SK-N-SH (cell line): ENCODE measurements at regions of chr6 and their contacts with region 1.

Region 1: GRCh38 chr6:30326526-30327260 is at the start of gene TRIM39:
- DNase-seq: peak; percentile 91
- H3K4me3 ChIP-seq: peak within 1 kb of the TSS; percentile 77 to 96
- H3K27ac ChIP-seq: peak within 1 kb of the TSS; percentile 89 to 98
- H3K4me1 ChIP-seq: peaks cover 6 to 7% of the 10 kb centered on the region in 2 experiments; a peak in 2 of 4 replicates
- H3K27me3 ChIP-seq: no peaks in the 10 kb centered on the region
- CTCF ChIP-seq: no peak
- EP300 ChIP-seq: no peak
- RAD21 ChIP-seq: no peak
- polyA plus RNA-seq, gene TRIM39: 6.5 and 7.4 TPM in 2 replicates

Region 2: DNA sequence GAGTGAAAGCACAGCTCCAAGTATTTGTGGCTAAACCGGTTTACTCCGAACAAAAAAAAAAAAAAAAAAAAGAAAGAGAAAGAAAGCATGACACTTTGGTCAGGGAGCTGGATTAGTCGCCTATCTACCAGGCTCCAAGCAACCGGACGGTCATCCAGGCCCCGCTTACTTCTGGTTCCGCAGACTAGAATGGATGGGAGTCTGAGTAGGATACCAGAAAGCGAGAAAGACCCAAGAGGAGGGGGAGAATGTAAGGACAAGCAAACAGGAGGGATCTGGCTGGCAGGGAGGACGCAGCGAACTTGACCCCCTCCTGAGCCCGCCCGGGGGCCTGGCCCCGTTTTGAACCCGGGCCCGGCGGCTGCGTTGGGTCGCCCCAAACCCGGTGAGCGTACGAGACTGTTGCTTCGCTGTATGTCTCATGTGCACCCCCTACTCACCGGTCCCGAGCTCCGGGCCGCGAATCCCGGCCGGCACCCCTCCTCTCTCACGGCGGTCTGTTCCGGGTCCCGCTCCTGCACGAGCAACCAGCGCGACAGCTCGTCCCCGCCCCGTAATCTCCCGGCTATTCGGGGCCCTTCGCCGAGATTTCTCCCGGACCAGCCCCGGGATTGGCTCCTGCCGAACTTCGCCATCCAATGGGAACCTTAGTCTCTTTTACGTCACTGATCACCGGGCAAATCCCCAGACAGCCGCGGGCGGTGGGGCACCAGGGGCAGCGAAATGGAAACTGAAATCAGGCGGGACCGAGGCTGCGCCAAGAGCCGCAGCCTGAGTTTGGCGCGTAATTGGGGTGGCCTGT is 113.6 kb before region 1 on chr6 and contains the start of gene TRIM26:
- CTCF ChIA-PET with region 1: interaction called, 19 read pairs
- POLR2A ChIA-PET with region 1: interaction called, 10 read pairs
- DNase-seq: peak; percentile 98
- H3K4me3 ChIP-seq: peak within 1 kb of the TSS; percentile 86 to 91
- H3K27ac ChIP-seq: peak within 1 kb of the TSS; percentile 80 to 94
- H3K4me1 ChIP-seq: peaks cover 10 to 15% of the 10 kb centered on the region in 2 experiments; a peak in 3 of 4 replicates
- H3K27me3 ChIP-seq: no peaks in the 10 kb centered on the region
- CTCF ChIP-seq: no peak
- EP300 ChIP-seq: peak in 1 of 2 experiments; percentile 36; a peak in 1 of 4 replicates
- RAD21 ChIP-seq: no peak
- polyA plus RNA-seq, gene TRIM26: 23.5 and 26.1 TPM in 2 replicates